ENCODE measurements at regions of chr12 and their contacts with region 1.

Region 1: GRCh38 chr12:124053851-124054250 is 80.8 kb downstream of the ZNF664 start:
- DNase-seq: no peak
- H3K4me3 ChIP-seq: no peak overlapping the region
- H3K27ac ChIP-seq: no peak overlapping the region
- H3K4me1 ChIP-seq: no peaks in the 10 kb centered on the region
- H3K27me3 ChIP-seq: no peaks in the 10 kb centered on the region
- CTCF ChIP-seq: peak; percentile 56 to 73 (median 72)

Region 2: GRCh38 chr12:124321040-124321481 is 267.2 kb after region 1 on chr12:
- intact Hi-C with region 1: loop called (anchors 1 kb)
- DNase-seq: peak in 1 of 2 donors; percentile 82
- H3K4me3 ChIP-seq: no peak overlapping the region
- H3K27ac ChIP-seq: peak overlapping the region in 1 of 2 donors; percentile 5
- H3K4me1 ChIP-seq: peaks cover 3 to 8% of the 10 kb centered on the region in 2 donors
- H3K27me3 ChIP-seq: no peaks in the 10 kb centered on the region
- CTCF ChIP-seq: peak; percentile 90 to 97 (median 96)

Region 3: GRCh38 chr12:124898200-124898922 is 844.5 kb after region 1 on chr12:
- intact Hi-C with region 1: loop called (anchors 5 kb)
- DNase-seq: no peak
- H3K4me3 ChIP-seq: peak overlapping the region in 1 of 2 donors; percentile 29
- H3K27ac ChIP-seq: no peak overlapping the region
- H3K4me1 ChIP-seq: no peaks in the 10 kb centered on the region
- H3K27me3 ChIP-seq: no peaks in the 10 kb centered on the region
- CTCF ChIP-seq: peak; percentile 23 to 44 (median 40)